B cell (primary cell): ENCODE measurements at regions of chr2 and their contacts with region 1.

Region 1: GRCh38 chr2:54522624-54523281 is 66.6 kb downstream of the SPTBN1 start:
- DNase-seq: peak; percentile 84
- ATAC-seq: peak; percentile 95
- H3K4me3 ChIP-seq: no peak overlapping the region
- H3K4me3 Mint-ChIP-seq: no peak overlapping the region
- H3K27ac ChIP-seq: no peak overlapping the region
- H3K27ac Mint-ChIP-seq: peak overlapping the region; percentile 72
- H3K4me1 ChIP-seq: no peaks in the 10 kb centered on the region
- H3K4me1 Mint-ChIP-seq: peaks cover 9% of the 10 kb centered on the region
- H3K27me3 ChIP-seq: no peaks in the 10 kb centered on the region
- H3K27me3 Mint-ChIP-seq: peaks cover 10% of the 10 kb centered on the region
- CTCF ChIP-seq: peak; percentile 85

Region 2: DNA sequence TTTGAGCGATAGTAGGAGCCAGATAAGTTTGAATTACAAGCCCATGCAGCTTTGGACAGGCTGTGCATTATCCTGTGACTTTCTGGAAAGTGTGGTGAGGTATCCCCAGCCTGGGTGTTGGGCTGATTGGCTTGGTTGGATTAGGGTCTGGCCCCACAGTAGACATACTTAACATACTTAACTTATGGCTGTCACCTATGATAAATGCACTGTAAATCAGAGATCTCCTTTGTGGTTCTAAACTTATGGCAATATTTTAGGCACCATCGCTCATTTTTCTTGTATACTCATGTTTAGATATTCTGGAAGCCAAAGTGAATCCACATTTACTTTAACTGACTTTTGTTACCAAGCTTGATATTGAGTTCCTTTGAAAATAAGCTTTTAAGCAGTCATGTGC is 11.8 kb before region 1 on chr2:
- CTCF ChIA-PET with region 1: no interaction called
- POLR2A ChIA-PET with region 1: no interaction called
- intact Hi-C with region 1: no loop called
- DNase-seq: no peak
- ATAC-seq: no peak
- H3K4me3 ChIP-seq: no peak overlapping the region
- H3K4me3 Mint-ChIP-seq: no peak overlapping the region
- H3K27ac ChIP-seq: no peak overlapping the region
- H3K27ac Mint-ChIP-seq: no peak overlapping the region
- H3K4me1 ChIP-seq: no peaks in the 10 kb centered on the region
- H3K4me1 Mint-ChIP-seq: no peaks in the 10 kb centered on the region
- H3K27me3 ChIP-seq: no peaks in the 10 kb centered on the region
- H3K27me3 Mint-ChIP-seq: no peaks in the 10 kb centered on the region
- CTCF ChIP-seq: no peak

Region 3: DNA sequence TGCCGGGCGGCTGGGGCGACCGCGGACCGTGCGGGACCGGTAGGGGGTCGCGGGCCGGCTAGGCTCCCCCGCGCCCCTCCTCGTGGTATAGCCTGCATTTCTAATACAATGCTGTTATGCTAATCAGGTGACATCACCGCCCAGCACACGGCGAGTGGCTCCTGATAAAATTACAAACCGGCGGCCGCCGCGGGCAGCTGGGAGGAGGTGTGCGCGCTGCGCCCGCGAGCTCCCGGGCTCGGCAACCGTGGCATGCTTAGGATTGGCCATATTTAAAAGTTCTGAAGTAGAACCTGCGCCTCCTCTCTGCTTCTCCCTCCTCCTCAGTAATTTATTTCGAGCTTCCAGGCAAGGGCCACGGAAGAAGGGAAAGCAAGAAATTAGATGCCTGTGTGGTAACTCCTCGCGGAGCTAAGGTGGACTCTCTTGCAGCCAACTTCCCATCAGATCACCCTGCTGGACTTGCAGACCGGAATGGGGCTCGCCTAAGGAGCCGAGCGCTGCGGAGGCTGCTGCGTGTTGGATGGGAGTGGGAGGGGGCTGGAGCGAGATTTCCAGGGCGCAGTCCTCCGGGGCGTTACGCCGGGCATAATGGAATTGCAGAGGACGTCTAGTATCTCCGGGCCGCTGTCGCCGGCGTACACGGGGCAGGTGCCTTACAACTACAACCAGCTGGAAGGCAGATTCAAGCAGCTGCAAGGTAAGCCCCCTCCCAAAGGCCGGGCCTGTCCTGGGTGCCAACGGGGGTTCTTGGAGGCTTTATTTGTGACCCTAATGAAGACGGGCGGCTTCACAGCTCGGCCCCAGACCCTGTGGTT is 35.6 kb after region 1 on chr2:
- CTCF ChIA-PET with region 1: interaction called, 13 read pairs
- POLR2A ChIA-PET with region 1: no interaction called
- intact Hi-C with region 1: loop called (anchors 5 kb)
- DNase-seq: peak; percentile 80
- ATAC-seq: peak; percentile 65
- H3K4me3 ChIP-seq: peak overlapping the region; percentile 91 to 99 (median 97)
- H3K4me3 Mint-ChIP-seq: peak overlapping the region; percentile 94
- H3K27ac ChIP-seq: peak overlapping the region; percentile 81 to 92
- H3K27ac Mint-ChIP-seq: peak overlapping the region; percentile 90
- H3K4me1 ChIP-seq: peaks cover 30 to 35% of the 10 kb centered on the region in 2 donors
- H3K4me1 Mint-ChIP-seq: peaks cover 54% of the 10 kb centered on the region
- H3K27me3 ChIP-seq: no peaks in the 10 kb centered on the region
- H3K27me3 Mint-ChIP-seq: no peaks in the 10 kb centered on the region
- CTCF ChIP-seq: no peak

Region 4: DNA sequence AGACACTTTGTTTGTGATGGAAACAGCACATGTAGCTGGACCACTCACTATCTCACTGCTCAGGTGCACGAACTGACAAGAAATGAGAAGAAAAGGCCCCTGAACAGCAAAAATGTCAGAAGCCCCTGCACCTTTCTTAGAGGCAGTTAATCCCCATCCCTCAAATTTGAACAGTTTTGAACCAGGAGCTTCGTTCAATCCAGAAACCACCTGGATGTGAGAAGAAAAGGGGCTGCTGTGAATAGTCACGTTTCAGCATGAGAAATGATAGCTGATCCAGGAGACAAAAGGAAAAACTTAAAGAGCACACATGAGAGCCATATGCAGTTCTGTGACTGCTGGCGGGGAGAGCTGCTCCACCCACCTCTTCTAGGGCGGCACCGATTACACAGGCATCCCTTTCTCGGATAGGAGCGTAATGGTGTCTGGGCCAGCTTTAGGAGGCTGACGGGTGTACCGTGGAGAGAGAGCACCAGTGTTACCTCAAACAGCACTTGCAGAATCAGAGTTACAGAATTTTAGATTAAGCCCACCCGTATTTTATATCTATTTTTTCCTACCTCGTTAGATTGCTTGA is 83.7 kb after region 1 on chr2:
- CTCF ChIA-PET with region 1: interaction called, 30 read pairs
- POLR2A ChIA-PET with region 1: no interaction called
- intact Hi-C with region 1: no loop called
- DNase-seq: no peak
- ATAC-seq: no peak
- H3K4me3 ChIP-seq: no peak overlapping the region
- H3K4me3 Mint-ChIP-seq: no peak overlapping the region
- H3K27ac ChIP-seq: no peak overlapping the region
- H3K27ac Mint-ChIP-seq: no peak overlapping the region
- H3K4me1 ChIP-seq: peaks cover 53 to 64% of the 10 kb centered on the region in 2 donors
- H3K4me1 Mint-ChIP-seq: peaks cover 82% of the 10 kb centered on the region
- H3K27me3 ChIP-seq: no peaks in the 10 kb centered on the region
- H3K27me3 Mint-ChIP-seq: no peaks in the 10 kb centered on the region
- CTCF ChIP-seq: no peak

Region 5: GRCh38 chr2:54641988-54642387 is 119.2 kb after region 1 on chr2:
- CTCF ChIA-PET with region 1: interaction called, 23 read pairs
- POLR2A ChIA-PET with region 1: no interaction called
- intact Hi-C with region 1: no loop called
- DNase-seq: no peak
- ATAC-seq: no peak
- H3K4me3 ChIP-seq: no peak overlapping the region
- H3K4me3 Mint-ChIP-seq: no peak overlapping the region
- H3K27ac ChIP-seq: no peak overlapping the region
- H3K27ac Mint-ChIP-seq: peak overlapping the region; percentile 32
- H3K4me1 ChIP-seq: peaks cover 14 to 21% of the 10 kb centered on the region in 2 donors
- H3K4me1 Mint-ChIP-seq: peaks cover 22% of the 10 kb centered on the region
- H3K27me3 ChIP-seq: no peaks in the 10 kb centered on the region
- H3K27me3 Mint-ChIP-seq: no peaks in the 10 kb centered on the region
- CTCF ChIP-seq: no peak

Region 6: GRCh38 chr2:54657664-54658083 is 134.9 kb after region 1 on chr2:
- CTCF ChIA-PET with region 1: interaction called, 58 read pairs
- POLR2A ChIA-PET with region 1: no interaction called
- intact Hi-C with region 1: loop called (anchors 2 kb)
- DNase-seq: peak; percentile 42
- ATAC-seq: peak; percentile 65
- H3K4me3 ChIP-seq: no peak overlapping the region
- H3K4me3 Mint-ChIP-seq: no peak overlapping the region
- H3K27ac ChIP-seq: no peak overlapping the region
- H3K27ac Mint-ChIP-seq: peak overlapping the region; percentile 53
- H3K4me1 ChIP-seq: no peaks in the 10 kb centered on the region
- H3K4me1 Mint-ChIP-seq: no peaks in the 10 kb centered on the region
- H3K27me3 ChIP-seq: no peaks in the 10 kb centered on the region
- H3K27me3 Mint-ChIP-seq: no peaks in the 10 kb centered on the region
- CTCF ChIP-seq: peak; percentile 67

Region 7: GRCh38 chr2:54838585-54839035 is 315.9 kb after region 1 on chr2:
- CTCF ChIA-PET with region 1: interaction called, 32 read pairs
- POLR2A ChIA-PET with region 1: no interaction called
- intact Hi-C with region 1: loop called (anchors 1 kb)
- DNase-seq: peak; percentile 78
- ATAC-seq: peak; percentile 83
- H3K4me3 ChIP-seq: no peak overlapping the region
- H3K4me3 Mint-ChIP-seq: no peak overlapping the region
- H3K27ac ChIP-seq: no peak overlapping the region
- H3K27ac Mint-ChIP-seq: peak overlapping the region; percentile 46
- H3K4me1 ChIP-seq: peaks cover 0 to 4% of the 10 kb centered on the region in 2 donors
- H3K4me1 Mint-ChIP-seq: peaks cover 4% of the 10 kb centered on the region
- H3K27me3 ChIP-seq: no peaks in the 10 kb centered on the region
- H3K27me3 Mint-ChIP-seq: no peaks in the 10 kb centered on the region
- CTCF ChIP-seq: peak; percentile 97